Kidney (tissue), 22 donors: ENCODE measurements at regions of chr6 and their contacts with region 1.

Region 1: GRCh38 chr6:2841264-2842138 is at the start of gene SERPINB1:
- DNase-seq: peak; percentile 93 to 98 (median 95)
- H3K4me3 ChIP-seq: peak within 1 kb of the TSS; percentile 56 to 82 (median 73)
- H3K27ac ChIP-seq: peak within 1 kb of the TSS; percentile 90 to 92
- H3K4me1 ChIP-seq: peaks cover 0 to 19% (median 8%) of the 10 kb centered on the region in 3 donors
- H3K27me3 ChIP-seq: no peaks in the 10 kb centered on the region
- CTCF ChIP-seq: no peak
- total RNA-seq, gene SERPINB1: 86.4 TPM

Region 2: DNA sequence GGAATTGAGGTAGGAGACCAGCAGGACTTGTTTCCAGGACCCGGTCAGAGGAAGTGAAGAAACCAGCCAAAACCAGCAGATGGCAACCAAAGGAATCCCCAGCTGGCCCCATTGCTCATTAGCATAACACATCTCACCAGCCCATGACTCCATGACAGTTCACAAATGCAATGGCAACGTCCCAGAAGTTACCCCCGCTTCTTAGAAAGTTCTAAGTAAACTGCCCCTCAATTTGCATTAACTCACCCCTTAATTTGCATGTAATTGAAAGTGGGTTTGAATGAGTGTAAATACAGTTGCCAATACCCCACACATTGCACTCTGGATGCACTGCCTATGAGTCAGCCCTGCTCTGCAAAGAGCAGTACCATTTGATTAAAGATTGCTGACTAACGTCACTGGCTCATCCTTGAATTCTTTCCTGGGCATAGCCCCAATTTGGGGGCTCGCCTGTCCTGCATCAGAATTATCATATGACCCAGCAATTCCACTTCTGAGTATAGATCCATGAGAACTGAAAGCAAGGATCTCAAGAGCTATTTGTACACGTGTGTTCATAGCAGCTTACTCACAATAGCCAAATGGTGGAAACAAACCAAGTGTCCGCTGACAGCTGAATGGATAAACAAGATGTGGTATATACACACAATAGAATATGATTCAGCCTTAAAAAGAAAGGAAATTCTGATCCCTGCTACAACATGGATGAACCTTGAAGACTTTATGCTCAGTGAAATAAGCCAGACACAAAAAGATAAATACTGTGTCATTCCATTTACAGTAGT is 127.2 kb before region 1 on chr6:
- intact Hi-C with region 1: no loop called
- DNase-seq: no peak
- H3K4me3 ChIP-seq: no peak overlapping the region
- H3K27ac ChIP-seq: no peak overlapping the region
- H3K4me1 ChIP-seq: peaks cover 0 to 13% (median 4%) of the 10 kb centered on the region in 3 donors
- H3K27me3 ChIP-seq: no peaks in the 10 kb centered on the region
- CTCF ChIP-seq: no peak

Region 3: GRCh38 chr6:2749969-2750600 is 91.4 kb before region 1 on chr6:
- intact Hi-C with region 1: no loop called
- DNase-seq: peak in 4 of 5 donors; percentile 59 to 81 (median 76)
- H3K4me3 ChIP-seq: peak overlapping the region in 2 of 3 donors; percentile 1 to 14
- H3K27ac ChIP-seq: no peak overlapping the region
- H3K4me1 ChIP-seq: no peaks in the 10 kb centered on the region
- H3K27me3 ChIP-seq: no peaks in the 10 kb centered on the region
- CTCF ChIP-seq: peak; percentile 62

Region 4: GRCh38 chr6:2911171-2911570 is 69.7 kb after region 1 on chr6:
- intact Hi-C with region 1: loop called (anchors 10 kb)
- DNase-seq: no peak
- H3K4me3 ChIP-seq: no peak overlapping the region
- H3K27ac ChIP-seq: no peak overlapping the region
- H3K4me1 ChIP-seq: no peaks in the 10 kb centered on the region
- H3K27me3 ChIP-seq: no peaks in the 10 kb centered on the region
- CTCF ChIP-seq: no peak